ENCODE measurements at regions of chrX and their contacts with region 1.

Region 1: GRCh38 chrX:132565273-132565672 is 76.4 kb upstream of the MBNL3 start:
- DNase-seq: no peak
- H3K4me3 Mint-ChIP-seq: no peak overlapping the region
- H3K27ac Mint-ChIP-seq: no peak overlapping the region
- H3K4me1 Mint-ChIP-seq: no peaks in the 10 kb centered on the region
- H3K27me3 Mint-ChIP-seq: peaks cover 3% of the 10 kb centered on the region

Region 2: GRCh38 chrX:132467026-132467425 is 98.2 kb before region 1 on chrX:
- intact Hi-C with region 1: no loop called
- DNase-seq: no peak
- H3K4me3 Mint-ChIP-seq: no peak overlapping the region
- H3K27ac Mint-ChIP-seq: no peak overlapping the region
- H3K4me1 Mint-ChIP-seq: no peaks in the 10 kb centered on the region
- H3K27me3 Mint-ChIP-seq: no peaks in the 10 kb centered on the region

Region 3: GRCh38 chrX:132539611-132540010 is 25.7 kb before region 1 on chrX:
- intact Hi-C with region 1: loop called (anchors 1 kb)
- DNase-seq: no peak
- H3K4me3 Mint-ChIP-seq: no peak overlapping the region
- H3K27ac Mint-ChIP-seq: no peak overlapping the region
- H3K4me1 Mint-ChIP-seq: no peaks in the 10 kb centered on the region
- H3K27me3 Mint-ChIP-seq: no peaks in the 10 kb centered on the region